Endothelial cell of umbilical vein (primary cell): ENCODE measurements at regions of chr20 and their contacts with region 1.

Region 1: DNA sequence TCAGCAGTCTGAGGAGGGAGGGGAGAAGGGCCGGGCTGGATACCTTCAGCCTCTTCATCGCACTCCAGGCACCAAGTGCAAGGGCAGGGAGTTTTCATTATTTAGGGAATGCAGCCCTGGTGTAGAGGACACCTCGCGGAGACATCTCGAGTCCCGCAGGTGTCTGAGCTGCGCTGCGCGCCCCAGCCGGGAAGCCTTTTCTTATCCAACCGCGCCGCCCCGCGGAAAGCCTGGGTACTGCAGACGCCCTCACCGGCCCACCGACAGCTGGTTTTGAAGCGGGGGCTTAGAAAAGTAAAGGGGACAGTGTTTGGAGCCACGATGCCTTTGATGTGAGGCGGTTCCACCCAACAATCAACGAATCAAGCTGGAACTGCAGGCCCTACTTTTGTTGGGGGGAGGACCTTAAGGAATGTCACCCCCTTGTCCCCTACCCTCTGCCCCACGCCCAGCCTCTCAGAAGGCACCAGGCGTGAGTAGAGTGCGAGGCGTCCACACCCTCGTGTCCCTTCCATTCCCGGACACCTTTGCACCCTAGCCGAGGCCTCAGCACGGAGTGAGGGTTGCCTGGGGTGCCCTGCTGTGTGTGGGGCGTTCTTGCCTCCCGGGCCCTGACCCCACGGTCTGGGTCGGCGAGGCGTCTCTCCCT is 8.6 kb downstream of the NKX2-2 start:
- DNase-seq: peak; percentile 45
- H3K4me3 ChIP-seq: no peak overlapping the region
- H3K27ac ChIP-seq: no peak overlapping the region
- H3K4me1 ChIP-seq: peaks cover 4% of the 10 kb centered on the region
- H3K27me3 ChIP-seq: peaks cover 40 to 45% of the 10 kb centered on the region in 2 experiments
- CTCF ChIP-seq: peak; percentile 93 to 96
- POLR2A ChIP-seq: no peak

Region 2: DNA sequence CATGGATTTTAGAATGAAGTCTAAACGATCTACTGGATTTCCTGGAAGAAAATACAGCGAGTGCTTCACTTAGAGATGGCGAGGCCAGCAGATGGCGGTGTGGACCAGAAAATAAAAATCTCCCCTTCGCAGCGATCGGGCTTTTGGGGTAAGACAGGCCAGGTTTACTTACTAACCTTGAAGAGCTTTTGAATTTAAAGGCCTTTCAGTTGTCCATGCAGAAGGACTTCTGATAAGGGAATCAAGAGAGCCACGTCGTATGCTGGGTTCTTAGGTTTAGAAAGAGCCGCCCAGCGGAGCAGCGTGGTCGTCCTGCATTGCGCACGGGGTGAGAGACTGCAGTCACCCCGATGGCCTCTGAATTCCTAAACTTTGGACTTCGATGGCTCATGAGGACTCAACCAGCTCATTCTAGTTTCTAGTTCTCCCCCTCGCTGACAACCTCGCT is 667.7 kb before region 1 on chr20:
- CTCF ChIA-PET with region 1: interaction called, 60 read pairs
- POLR2A ChIA-PET with region 1: no interaction called
- dilution Hi-C with region 1: no loop called
- intact Hi-C with region 1: loop called (anchors 1 kb)
- DNase-seq: peak; percentile 59
- H3K4me3 ChIP-seq: no peak overlapping the region
- H3K27ac ChIP-seq: no peak overlapping the region
- H3K4me1 ChIP-seq: no peaks in the 10 kb centered on the region
- H3K27me3 ChIP-seq: peaks cover 0 to 3% of the 10 kb centered on the region in 2 experiments
- CTCF ChIP-seq: peak; percentile 64 to 77
- POLR2A ChIP-seq: no peak

Region 3: DNA sequence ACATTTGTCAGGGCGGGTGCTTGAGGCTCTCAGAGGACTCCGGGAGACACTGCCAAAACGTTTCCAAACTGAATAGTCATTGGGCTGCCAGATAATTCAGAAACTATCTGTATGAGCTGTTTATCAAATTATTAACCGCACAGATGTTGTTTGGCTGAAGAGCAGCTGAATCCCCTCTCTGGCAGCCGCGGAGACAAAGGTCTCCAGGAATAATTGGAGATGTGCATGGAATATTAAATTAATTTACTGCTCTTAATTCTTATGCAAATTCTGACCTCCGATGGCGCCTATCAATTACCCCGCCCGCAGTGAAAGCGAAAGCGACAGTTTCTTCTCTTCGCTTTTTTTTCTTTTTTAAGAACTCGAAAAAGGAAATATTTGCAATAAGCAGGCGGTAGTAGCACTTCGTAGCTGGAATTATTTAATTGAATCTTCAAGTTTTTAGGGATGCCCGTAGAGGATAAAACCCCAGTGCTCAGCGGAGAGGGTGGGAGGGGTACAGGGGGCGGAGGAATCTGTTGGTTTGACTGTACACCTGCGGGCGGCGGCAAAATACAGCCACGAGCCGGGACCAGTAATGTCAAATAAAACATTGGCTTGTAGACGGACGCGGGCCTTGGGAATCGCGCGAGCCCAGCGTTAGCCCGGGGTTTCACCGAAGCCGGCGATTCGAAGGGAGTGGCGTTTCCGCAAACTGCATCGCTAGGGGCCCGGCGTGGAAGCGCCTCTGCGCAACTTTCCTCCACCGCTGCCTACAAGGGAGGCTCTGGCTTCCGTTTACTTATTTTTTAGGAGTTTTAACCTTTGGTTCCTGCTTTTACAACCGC is 405.3 kb before region 1 on chr20:
- CTCF ChIA-PET with region 1: interaction called, 8 read pairs
- POLR2A ChIA-PET with region 1: no interaction called
- dilution Hi-C with region 1: no loop called
- intact Hi-C with region 1: loop called (anchors 5 kb)
- DNase-seq: no peak
- H3K4me3 ChIP-seq: peak overlapping the region in 2 of 3 experiments; percentile 16 to 19
- H3K27ac ChIP-seq: no peak overlapping the region
- H3K4me1 ChIP-seq: peaks cover 13% of the 10 kb centered on the region
- H3K27me3 ChIP-seq: peaks cover 70 to 89% of the 10 kb centered on the region in 2 experiments
- CTCF ChIP-seq: no peak
- POLR2A ChIP-seq: no peak

Region 4: GRCh38 chr20:21395666-21396598 is 109.4 kb before region 1 on chr20:
- CTCF ChIA-PET with region 1: no interaction called
- POLR2A ChIA-PET with region 1: no interaction called
- dilution Hi-C with region 1: no loop called
- intact Hi-C with region 1: loop called (anchors 5 kb)
- DNase-seq: peak; percentile 32
- H3K4me3 ChIP-seq: no peak overlapping the region
- H3K27ac ChIP-seq: no peak overlapping the region
- H3K4me1 ChIP-seq: peaks cover 7% of the 10 kb centered on the region
- H3K27me3 ChIP-seq: peaks cover 70 to 100% of the 10 kb centered on the region in 2 experiments
- CTCF ChIP-seq: no peak
- POLR2A ChIP-seq: no peak

Region 5: DNA sequence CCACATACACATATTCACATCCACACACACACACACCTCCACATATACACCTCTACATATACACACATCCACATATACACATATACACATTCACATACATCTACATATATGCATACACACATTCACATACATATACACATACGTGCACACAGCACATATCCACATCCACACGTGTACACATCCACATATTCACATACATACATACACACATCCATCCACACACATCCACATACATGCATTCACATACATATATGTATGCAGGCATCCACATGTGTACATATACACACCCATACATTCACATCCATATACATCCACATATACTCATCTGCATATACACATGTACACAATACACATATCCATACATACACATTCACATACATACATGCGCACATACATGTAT is 34.2 kb after region 1 on chr20:
- CTCF ChIA-PET with region 1: no interaction called
- POLR2A ChIA-PET with region 1: no interaction called
- dilution Hi-C with region 1: no loop called
- intact Hi-C with region 1: no loop called
- DNase-seq: no peak
- H3K4me3 ChIP-seq: no peak overlapping the region
- H3K27ac ChIP-seq: no peak overlapping the region
- H3K4me1 ChIP-seq: no peaks in the 10 kb centered on the region
- H3K27me3 ChIP-seq: no peaks in the 10 kb centered on the region
- CTCF ChIP-seq: no peak
- POLR2A ChIP-seq: no peak

Region 6: DNA sequence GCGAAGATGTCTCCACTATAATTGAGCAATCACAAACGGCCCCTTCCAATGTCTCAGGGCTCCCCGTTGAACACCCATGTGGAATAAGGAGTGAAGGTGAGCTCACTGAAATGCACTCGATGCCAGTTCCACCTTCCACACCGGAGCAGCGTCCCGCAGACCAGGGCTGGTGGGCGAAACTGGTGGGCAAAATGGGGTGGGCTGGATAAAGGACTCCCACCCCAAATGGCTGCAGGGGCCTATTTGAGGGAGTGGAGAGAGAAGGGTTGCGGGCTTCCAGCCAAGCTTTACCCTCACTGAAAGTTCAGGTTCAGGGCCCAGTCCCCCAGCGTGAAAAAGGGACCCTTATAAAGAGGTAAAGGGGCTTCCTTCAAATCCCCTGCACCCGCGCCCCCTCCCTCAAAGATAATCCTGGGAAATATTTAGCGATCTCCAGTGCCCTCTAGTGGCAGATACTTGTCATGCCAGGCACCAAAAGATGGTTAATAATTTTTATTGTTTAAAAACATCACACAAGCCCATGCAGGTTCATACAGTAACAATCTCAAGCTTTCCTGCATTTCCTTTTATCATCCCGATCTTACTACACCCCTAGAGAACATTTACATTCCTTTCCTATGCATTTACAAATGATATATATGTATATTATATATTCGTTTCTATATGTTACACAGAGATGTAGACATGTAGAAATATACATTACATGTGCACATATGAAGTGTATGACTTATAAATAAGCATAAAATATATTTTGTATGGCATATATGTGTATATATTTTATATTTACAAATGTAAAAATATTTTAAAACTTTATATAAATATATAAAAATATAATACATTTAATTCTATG is 66.8 kb after region 1 on chr20:
- CTCF ChIA-PET with region 1: interaction called, 11 read pairs
- POLR2A ChIA-PET with region 1: no interaction called
- dilution Hi-C with region 1: no loop called
- intact Hi-C with region 1: loop called (anchors 1 kb)
- DNase-seq: peak; percentile 18
- H3K4me3 ChIP-seq: no peak overlapping the region
- H3K27ac ChIP-seq: no peak overlapping the region
- H3K4me1 ChIP-seq: no peaks in the 10 kb centered on the region
- H3K27me3 ChIP-seq: no peaks in the 10 kb centered on the region
- CTCF ChIP-seq: peak; percentile 63 to 85
- POLR2A ChIP-seq: no peak